ENCODE measurements at regions of chr6 and their contacts with region 1.

Region 1: GRCh38 chr6:89940225-89941027 is 46.2 kb downstream of the GJA10 start:
- DNase-seq: peak; percentile 54
- H3K4me3 ChIP-seq: no peak overlapping the region
- CTCF ChIP-seq: peak; percentile 78

Region 2: GRCh38 chr6:89952686-89953085 is 12.3 kb after region 1 on chr6:
- CTCF ChIA-PET with region 1: interaction called, 22 read pairs
- POLR2A ChIA-PET with region 1: no interaction called
- DNase-seq: peak; percentile 78
- H3K4me3 ChIP-seq: no peak overlapping the region
- CTCF ChIP-seq: no peak

Region 3: GRCh38 chr6:90179190-90180169 is 239.1 kb after region 1 on chr6:
- CTCF ChIA-PET with region 1: interaction called, 19 read pairs
- POLR2A ChIA-PET with region 1: no interaction called
- DNase-seq: no peak
- H3K4me3 ChIP-seq: no peak overlapping the region
- CTCF ChIP-seq: no peak

Region 4: DNA sequence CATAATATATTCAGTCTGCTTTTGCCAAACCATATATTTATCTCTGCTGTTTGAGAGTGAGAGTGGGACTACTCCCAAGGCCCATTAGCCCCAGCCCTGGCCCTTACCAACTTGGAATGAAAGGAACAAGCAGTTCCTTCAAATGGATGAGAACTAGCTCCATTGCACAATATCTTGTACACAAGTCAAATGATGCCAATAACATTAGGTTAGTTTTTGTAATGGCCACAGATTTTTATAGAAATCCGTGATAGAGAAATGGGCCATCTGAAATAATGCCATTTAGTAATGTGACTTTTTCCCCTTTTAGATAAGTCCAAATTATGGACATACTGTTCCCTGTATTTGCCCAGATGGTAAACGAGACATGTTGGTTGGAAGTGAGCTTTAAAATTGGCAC is 529.5 kb after region 1 on chr6:
- CTCF ChIA-PET with region 1: interaction called, 291 read pairs
- POLR2A ChIA-PET with region 1: no interaction called
- DNase-seq: no peak
- H3K4me3 ChIP-seq: no peak overlapping the region
- CTCF ChIP-seq: no peak

Region 5: GRCh38 chr6:90490030-90490716 is 549.7 kb after region 1 on chr6:
- CTCF ChIA-PET with region 1: interaction called, 291 read pairs
- POLR2A ChIA-PET with region 1: no interaction called
- DNase-seq: no peak
- H3K4me3 ChIP-seq: no peak overlapping the region
- CTCF ChIP-seq: no peak

Measured in AG04449 (cell line).